Posterior vena cava (tissue), 2 donors: ENCODE measurements at regions of chr3 and their contacts with region 1.

Region 1: DNA sequence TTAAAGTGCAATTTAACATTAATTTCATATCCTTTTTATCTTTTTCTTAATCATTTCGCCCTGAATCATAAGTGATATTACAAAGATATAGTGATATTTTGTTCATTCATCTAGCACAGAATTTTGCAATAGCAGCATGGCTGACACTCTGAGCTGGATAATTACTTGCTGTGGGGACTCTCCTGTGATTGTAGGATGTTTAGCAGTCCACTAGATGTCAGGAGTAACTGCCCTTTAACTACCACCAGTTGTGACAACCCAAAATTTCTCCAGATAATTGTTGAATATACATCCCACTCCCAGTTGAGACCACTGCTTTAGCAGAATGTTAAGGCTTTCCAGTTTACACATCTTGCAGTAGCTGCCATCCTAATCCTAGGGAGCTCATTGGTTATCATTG is 196.8 kb upstream of the MBNL1 start:
- DNase-seq: no peak

Region 2: DNA sequence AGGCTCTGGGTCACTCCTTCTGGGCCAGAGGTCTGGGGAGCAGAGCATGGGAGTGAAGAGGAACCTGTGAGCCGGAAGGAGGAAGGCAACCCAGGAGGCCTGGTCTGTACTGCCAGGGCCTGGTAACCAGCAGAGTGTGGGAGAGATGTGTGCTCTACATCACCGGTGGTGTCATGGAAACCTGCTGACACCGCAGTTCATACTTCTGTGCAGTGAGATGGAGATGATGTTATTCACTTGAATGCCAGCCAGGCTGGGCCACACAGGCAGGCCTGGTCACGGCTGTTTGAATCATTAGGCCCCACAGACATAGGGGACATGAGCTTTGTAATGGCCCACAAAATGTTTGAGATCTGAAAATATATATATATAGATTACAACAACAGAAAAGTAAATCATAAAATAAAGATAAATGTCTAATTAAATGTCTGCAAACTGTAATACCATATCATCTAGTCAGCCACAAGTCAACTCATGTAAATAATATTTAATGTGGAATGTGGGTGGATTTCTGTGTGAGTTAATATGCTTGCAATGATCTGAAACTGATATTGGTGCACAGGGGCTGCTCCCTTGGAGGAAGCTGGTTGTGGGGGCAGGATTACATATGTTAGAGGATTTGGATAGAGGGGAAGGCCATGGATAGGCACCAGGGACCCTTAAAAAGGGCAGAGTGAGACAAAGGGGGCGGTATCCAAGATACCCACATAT is 1992.7 kb before region 1 on chr3:
- intact Hi-C with region 1: loop called in 1 of 2 experiments (anchors 10 kb)
- DNase-seq: no peak

Region 3: GRCh38 chr3:152087153-152087552 is 15.2 kb after region 1 on chr3:
- intact Hi-C with region 1: no loop called
- DNase-seq: no peak